ENCODE measurements at regions of chr19 and their contacts with region 1.

Region 1: DNA sequence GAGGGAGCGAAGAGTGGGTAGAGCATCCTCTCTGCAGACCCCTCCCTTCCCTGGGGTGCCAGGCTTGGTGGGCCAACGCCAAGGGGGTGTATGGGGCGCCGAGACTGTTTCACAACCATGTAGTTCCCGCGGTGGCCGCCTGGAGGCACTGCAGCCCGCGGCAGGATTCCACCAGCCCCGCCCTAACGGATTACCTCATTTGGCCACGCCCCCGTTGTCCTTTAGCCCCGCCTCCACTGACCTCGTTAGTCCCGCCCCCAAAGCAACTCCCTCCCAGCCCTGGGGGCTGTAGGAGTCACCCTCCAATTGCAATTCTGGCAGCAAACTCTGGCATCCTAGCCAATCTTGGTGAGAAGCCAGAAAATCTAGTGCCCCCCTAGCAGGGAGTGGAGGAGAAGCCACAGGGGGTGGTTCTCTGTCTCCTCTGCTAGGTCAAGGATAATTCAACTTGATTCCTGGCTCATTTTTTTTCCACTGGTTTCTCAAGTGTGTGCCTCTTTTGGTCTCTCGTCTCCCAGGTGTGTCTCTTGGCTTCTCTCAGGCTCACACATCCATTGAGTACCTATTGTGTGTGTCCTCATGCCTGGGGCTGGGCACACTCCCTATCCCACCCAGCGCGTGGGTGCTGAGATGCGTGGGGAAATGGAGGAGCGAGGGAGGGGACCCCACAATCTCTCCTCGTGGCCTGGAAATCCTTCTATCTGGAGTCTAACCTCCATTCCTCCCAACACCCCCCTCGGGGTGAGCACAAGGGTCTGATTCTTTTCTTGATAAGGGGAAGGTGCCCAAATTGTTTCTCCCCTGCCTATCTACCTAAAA is 2.0 kb downstream of the OLFM2 start:
- DNase-seq: peak; percentile 84 to 87
- H3K4me3 ChIP-seq: no peak overlapping the region
- H3K27ac ChIP-seq: peak overlapping the region in 2 of 3 donors; percentile 26 to 50
- H3K4me1 ChIP-seq: peaks cover 18 to 37% of the 10 kb centered on the region in 2 donors
- H3K27me3 ChIP-seq: no peaks in the 10 kb centered on the region
- CTCF ChIP-seq: peak; percentile 73 to 95 (median 86)
- POLR2A ChIP-seq: no peak

Region 2: GRCh38 chr19:9796113-9796773 is 138.1 kb before region 1 on chr19:
- intact Hi-C with region 1: no loop called
- DNase-seq: peak; percentile 86 to 88
- H3K4me3 ChIP-seq: no peak overlapping the region
- H3K27ac ChIP-seq: no peak overlapping the region
- H3K4me1 ChIP-seq: peaks cover 3 to 5% of the 10 kb centered on the region in 2 donors
- H3K27me3 ChIP-seq: no peaks in the 10 kb centered on the region
- CTCF ChIP-seq: peak; percentile 43 to 92 (median 87)
- POLR2A ChIP-seq: no peak

Region 3: DNA sequence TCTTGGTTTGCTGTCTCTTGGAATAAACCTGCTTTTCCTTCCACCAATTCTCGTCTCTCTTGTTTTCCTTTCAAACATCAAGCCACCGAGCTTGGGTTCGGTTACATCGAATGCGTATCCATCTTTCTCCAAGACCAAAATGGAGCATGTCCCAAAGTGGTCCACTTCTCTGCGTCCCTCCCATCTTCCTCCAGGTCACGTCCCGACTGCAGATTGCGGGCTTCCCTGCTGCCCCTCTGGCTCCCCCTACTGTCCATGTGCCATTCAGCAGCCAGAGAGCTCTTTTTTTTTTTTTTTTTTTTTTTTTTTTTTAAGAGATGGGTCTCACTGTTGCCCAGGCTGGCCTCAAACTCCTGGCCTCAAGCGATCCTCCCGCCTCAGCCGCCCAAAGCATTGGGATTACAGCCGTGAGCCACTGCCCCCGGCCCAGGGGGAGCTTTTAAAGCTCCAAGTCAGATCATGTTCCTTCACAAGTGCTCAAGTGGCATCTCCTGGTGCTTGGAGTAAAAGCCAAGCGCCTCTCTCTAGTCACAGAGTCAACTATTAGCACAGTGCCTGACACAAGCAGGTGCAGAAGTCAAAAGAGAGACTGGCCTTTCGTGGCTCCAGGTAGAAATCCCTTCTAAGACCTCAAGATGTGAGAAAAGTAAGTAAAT is 66.0 kb after region 1 on chr19:
- intact Hi-C with region 1: loop called (anchors 5 kb)
- DNase-seq: peak; percentile 72 to 76
- H3K4me3 ChIP-seq: no peak overlapping the region
- H3K27ac ChIP-seq: no peak overlapping the region
- H3K4me1 ChIP-seq: no peaks in the 10 kb centered on the region
- H3K27me3 ChIP-seq: no peaks in the 10 kb centered on the region
- CTCF ChIP-seq: peak; percentile 37 to 75 (median 52)
- POLR2A ChIP-seq: no peak

Region 4: DNA sequence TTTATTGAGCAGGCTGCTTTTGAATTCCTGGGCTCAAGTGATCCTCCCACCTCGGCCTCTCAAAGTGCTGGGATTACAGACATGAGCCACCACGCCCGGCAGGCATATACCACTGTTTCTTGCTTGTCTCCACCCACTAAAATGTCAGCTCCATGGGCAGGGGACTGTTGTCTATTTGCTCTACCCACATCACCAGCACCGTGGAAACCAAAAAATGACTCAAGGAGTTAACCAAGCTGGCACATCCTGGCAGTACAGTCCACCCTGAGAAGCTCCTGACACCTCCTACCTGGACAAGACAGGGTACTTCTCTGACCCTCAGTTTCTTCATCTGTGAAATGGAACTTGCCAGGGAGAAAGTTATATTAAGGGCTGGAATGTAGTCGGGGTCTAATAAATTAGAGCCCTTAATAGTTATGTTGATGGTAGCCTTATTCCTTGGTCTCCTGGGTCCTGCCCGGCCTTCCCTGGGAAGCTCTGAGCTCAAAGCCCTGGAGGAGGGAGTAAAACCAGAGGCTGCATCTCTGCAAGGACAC is 92.9 kb after region 1 on chr19:
- intact Hi-C with region 1: loop called (anchors 2 kb)
- DNase-seq: no peak
- H3K4me3 ChIP-seq: no peak overlapping the region
- H3K27ac ChIP-seq: no peak overlapping the region
- H3K4me1 ChIP-seq: peaks cover 0 to 7% of the 10 kb centered on the region in 2 donors
- H3K27me3 ChIP-seq: no peaks in the 10 kb centered on the region
- CTCF ChIP-seq: no peak
- POLR2A ChIP-seq: no peak

Region 5: DNA sequence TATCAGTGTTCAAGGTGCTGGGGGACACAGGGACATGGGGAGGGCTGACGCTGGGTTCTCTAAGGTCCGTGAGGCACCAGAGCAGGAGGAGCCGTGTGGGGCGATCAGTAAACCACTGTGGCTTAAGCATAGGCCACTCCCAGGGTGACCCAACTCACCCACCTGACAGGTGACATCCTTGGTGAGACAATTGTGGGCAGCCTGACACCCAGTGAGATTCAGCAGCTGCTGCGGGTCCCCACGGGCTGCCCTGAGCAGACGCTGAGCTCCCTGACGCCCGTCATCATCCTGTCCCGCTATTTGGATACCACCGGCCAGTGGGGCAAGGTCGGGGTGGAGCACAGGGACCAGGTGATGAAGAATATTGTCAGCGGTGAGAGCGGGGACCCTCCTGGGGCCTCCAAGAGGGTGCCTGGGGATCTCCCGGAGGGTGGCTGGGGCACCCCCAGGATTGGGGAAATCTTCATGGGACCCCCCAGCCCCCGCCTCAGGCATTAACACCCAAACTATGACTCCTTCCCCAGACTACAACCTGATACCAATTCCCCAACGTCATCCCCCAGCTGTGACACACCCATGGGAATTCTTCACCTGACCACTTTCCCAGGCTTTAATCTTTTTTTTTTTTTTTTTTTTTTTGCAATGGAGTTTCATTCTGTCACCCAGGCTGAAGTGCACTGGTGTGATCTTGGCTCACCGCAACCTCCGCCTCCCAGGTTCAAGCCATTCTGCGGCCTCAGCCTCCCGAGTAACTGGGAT is 118.4 kb after region 1 on chr19:
- intact Hi-C with region 1: no loop called
- DNase-seq: no peak
- H3K4me3 ChIP-seq: no peak overlapping the region
- H3K27ac ChIP-seq: no peak overlapping the region
- H3K4me1 ChIP-seq: no peaks in the 10 kb centered on the region
- H3K27me3 ChIP-seq: no peaks in the 10 kb centered on the region
- CTCF ChIP-seq: no peak
- POLR2A ChIP-seq: no peak

Region 6: GRCh38 chr19:10251792-10252694 is 317.7 kb after region 1 on chr19 and contains the start of gene MRPL4:
- intact Hi-C with region 1: loop called (anchors 10 kb)
- DNase-seq: peak; percentile 98
- H3K4me3 ChIP-seq: peak within 1 kb of the TSS; percentile 54 to 85 (median 85)
- H3K27ac ChIP-seq: peak within 1 kb of the TSS; percentile 45 to 65 (median 52)
- H3K4me1 ChIP-seq: peaks cover 0 to 7% of the 10 kb centered on the region in 2 donors
- H3K27me3 ChIP-seq: no peaks in the 10 kb centered on the region
- CTCF ChIP-seq: peak in 1 of 6 experiments; percentile 20
- POLR2A ChIP-seq: peak in 1 of 2 donors; percentile 54
- total RNA-seq, gene MRPL4: 36.1 to 81.7 (median 54.9) TPM

Region 7: DNA sequence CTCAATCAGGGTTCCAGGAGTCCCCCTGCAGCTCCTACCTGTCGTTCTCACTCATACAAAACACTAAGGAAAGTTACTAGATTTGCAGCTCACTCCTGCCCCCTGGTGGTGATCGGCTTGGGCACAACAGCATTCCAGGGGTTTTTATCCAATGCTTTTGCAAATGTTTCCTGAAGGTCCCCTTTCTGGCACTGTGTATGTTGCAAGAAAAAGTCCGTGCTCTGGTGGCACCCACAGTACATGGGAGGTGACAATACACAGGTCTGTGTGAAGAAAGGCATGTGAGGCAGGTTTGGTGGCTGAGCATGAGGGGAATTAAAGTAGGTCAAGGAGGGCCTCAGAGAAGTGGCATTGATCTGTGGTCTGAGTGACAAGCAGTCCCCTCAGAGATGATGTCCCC is 454.6 kb after region 1 on chr19:
- intact Hi-C with region 1: loop called (anchors 10 kb)
- DNase-seq: peak; percentile 89 to 93
- H3K4me3 ChIP-seq: no peak overlapping the region
- H3K27ac ChIP-seq: no peak overlapping the region
- H3K4me1 ChIP-seq: peaks cover 4 to 5% of the 10 kb centered on the region in 2 donors
- H3K27me3 ChIP-seq: no peaks in the 10 kb centered on the region
- CTCF ChIP-seq: peak; percentile 80 to 96 (median 90)
- POLR2A ChIP-seq: no peak

Region 8: DNA sequence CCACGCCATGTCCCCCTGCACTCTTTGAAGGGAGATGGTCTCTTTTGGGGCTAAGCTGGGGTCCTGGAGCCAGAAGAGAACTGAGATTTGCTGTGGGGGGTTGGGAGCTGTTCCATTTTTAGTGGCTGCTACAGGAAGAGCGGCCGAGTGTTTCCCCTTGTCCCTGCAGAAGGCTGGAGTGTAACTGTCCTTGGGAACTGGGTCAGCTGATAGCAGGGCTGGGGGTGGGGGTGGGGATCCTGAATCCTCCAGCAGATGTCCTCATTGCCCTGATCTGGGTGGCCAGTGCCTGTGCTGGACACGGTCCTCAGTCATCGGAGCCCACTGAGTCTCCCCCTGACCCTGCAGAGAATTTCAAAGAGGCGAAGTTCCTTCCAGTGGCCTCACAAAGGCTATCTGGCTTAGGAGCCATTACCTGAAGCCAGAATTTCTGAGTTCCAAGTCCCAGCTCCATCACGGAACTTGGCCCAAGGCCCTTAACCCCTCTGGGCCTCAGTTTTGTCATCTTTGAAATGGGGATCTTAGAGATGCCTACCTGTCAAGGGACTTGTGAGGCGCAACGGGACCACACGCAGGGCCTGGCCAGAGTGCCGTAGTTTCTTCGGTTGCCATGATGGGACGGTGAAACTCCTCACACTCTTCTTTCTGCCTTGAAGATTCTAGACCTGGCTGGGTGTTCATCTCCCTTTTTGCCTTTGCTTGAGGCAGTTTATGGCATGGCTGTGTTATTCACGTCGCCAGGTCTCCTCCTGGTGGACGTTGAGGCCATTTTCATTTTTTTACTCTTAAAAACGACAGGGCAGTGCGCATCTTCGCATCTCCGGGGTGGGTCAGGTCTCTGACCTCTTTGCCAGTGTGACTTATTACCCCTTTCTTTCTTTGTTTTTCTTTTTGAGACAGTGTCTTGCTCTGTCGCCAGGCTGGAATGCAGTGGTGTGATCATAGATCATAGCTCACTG is 835.5 kb after region 1 on chr19:
- intact Hi-C with region 1: no loop called
- DNase-seq: peak in 1 of 2 donors; percentile 33
- H3K4me3 ChIP-seq: no peak overlapping the region
- H3K27ac ChIP-seq: peak overlapping the region in 2 of 3 donors; percentile 51 to 65
- H3K4me1 ChIP-seq: peaks cover 23 to 52% of the 10 kb centered on the region in 2 donors
- H3K27me3 ChIP-seq: no peaks in the 10 kb centered on the region
- CTCF ChIP-seq: peak in 2 of 6 experiments; percentile 10 to 19
- POLR2A ChIP-seq: no peak

Measured in thyroid gland (tissue), 4 donors.